GM18951 (cell line): ENCODE measurements at regions of chr20 and their contacts with region 1.

Region 1: GRCh38 chr20:33984182-33984719 is 9.5 kb upstream of the RALY start:
- POLR2A ChIP-seq: no peak

Region 2: DNA sequence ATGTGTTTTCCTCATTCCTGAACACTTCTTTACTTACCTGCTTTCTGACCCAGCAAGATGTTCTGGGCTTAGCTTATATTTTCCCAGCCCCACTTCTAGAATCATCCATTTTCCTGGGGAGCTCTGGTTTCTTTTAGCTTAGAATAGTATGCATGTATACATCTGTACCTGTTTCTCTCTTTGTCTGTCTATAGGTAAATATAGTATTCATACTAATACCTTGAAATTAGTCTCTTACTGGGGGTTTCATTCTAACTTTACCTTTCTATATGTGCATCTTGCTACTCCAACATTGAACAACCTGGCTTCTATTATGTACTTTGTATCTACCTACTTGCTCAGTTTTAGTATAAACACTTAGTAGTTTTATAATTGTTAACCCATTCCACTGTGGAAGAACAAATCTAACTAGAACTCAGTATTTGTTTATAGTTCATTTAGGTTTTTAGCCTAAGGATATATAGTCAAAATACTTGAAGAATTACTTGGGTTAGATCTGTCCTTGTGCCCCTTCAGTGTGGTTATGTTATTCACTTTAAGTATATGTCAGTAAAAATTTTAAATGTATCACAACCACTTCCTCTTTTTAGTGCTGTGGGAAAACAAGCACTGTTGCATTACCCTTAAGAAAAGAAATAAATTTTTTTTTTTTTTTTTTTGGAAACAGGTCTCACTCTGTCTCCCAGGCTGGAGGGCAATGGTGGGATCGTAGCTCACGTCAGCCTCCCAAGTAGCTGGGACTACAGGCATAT is 1572.1 kb before region 1 on chr20:
- in situ Hi-C with region 1: loop called (anchors 10 kb)
- POLR2A ChIP-seq: no peak